Right ventricle myocardium inferior (tissue), 1 donor: ENCODE measurements at regions of chr1 and their contacts with region 1.

Region 1: DNA sequence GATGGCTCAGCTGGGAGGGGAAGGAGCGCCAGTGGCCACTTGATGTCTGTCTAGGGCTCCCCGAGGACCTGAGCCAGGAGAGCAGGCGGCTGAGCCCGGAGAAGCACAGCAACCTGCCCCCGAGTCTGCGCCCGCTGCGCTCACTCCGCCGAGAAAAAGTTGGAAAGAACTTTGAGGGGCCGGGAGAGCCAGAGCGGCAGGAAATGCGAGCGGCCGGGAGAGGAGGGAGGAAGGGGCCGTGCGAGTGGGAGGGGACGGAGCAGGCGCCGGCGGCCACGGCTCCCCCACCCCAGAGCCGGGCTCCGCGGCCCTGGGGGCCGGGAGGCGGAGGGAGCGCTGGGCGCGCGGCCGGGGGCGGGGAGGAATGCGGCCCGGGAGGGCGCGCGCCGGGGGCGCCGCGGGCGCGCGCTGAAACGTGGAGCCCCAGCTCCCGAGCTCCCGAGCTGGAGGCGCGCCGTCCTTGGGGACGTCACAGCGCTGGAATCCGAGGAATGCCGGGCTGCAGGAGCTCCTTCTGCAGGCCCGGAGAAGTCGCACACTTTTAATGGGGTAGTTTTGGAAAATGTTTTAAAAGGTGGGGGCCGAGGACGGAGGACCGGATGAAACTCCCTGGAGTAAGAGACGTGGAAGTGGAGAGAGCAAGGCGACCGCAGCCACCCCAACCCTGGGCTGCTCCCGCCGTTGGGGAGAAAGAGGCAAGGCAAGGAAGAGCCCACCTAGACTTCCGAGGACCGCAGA is at the start of gene PTPN14:
- DNase-seq: peak; percentile 90
- ATAC-seq: peak; percentile 93
- total RNA-seq, gene PTPN14: 23.0 TPM

Region 2: GRCh38 chr1:213443415-213443814 is 1108.2 kb before region 1 on chr1:
- intact Hi-C with region 1: no loop called
- DNase-seq: no peak
- ATAC-seq: no peak

Region 3: GRCh38 chr1:214328770-214329469 is 222.7 kb before region 1 on chr1:
- intact Hi-C with region 1: loop called (anchors 10 kb)
- DNase-seq: peak; percentile 73
- ATAC-seq: peak; percentile 90

Region 4: GRCh38 chr1:214362188-214362882 is 189.3 kb before region 1 on chr1:
- intact Hi-C with region 1: loop called (anchors 10 kb)
- DNase-seq: no peak
- ATAC-seq: peak; percentile 75

Region 5: DNA sequence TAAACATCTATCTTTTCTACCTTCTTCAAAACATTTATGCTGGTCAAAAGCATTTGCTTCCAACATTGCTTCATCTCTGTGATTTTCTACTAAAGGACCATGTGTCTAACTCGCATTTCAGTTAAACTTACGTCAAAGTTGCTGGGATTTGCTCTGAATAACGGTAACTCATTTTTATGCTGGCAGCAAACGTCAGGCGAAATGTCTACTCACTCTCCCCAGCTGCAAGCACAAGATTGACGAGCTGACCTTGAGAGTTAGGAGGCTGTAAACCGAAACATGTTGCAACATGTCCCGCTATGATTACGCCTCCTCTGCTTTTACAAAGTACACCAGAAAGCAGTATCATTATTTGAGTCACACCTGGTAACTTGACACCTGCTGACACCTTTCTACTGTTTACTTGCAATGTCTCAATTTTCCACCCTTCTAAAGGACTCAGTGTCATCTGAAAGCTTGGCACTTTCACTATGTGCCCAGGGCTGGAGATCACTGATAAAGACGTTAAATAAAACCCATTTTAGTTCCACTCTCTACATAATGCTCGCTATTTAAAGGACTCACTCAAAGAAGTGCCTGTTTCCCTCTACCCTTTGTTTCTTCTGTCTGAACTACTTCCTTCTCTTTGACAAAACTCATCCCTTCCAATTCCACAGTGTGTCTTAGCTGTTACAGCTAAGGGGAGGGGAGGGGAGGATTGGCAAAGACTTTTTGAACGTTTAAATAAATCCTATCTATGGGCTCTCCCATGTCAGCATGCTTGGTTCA is 112.1 kb before region 1 on chr1:
- intact Hi-C with region 1: loop called (anchors 5 kb)
- DNase-seq: no peak
- ATAC-seq: peak; percentile 81